Calu3 (cell line): ENCODE measurements at regions of chr11 and their contacts with region 1.

Region 1: GRCh38 chr11:77091146-77091940 is 11.3 kb upstream of the OMP start:
- DNase-seq: peak; percentile 89
- H3K4me3 Mint-ChIP-seq: no peak overlapping the region
- H3K27ac Mint-ChIP-seq: no peak overlapping the region
- H3K4me1 Mint-ChIP-seq: peaks cover 56% of the 10 kb centered on the region
- H3K27me3 Mint-ChIP-seq: no peaks in the 10 kb centered on the region
- CTCF ChIP-seq: peak; percentile 95

Region 2: DNA sequence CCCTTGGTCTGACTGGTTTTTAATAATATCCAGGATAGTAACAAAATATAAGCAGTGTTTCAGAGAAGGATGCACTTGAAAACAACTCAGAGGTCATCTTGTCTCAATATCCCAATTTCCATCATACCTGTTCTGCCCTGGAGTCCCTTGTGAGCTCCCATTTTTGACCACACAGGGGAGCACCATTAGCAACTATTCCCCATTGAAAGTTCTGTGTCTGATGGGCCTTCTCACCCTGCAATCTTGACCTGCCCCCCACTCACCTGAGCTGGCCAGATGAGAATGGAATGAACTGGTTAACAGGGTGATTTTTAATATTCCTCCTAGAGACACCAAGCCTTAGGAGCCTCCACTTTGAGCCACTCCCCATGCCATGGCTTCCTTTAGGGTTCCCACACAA is 28.4 kb before region 1 on chr11:
- CTCF ChIA-PET with region 1: interaction called, 71 read pairs
- intact Hi-C with region 1: loop called (anchors 1 kb)
- DNase-seq: peak; percentile 32
- H3K4me3 Mint-ChIP-seq: no peak overlapping the region
- H3K27ac Mint-ChIP-seq: peak overlapping the region; percentile 36
- H3K4me1 Mint-ChIP-seq: peaks cover 50% of the 10 kb centered on the region
- H3K27me3 Mint-ChIP-seq: no peaks in the 10 kb centered on the region
- CTCF ChIP-seq: no peak

Region 3: DNA sequence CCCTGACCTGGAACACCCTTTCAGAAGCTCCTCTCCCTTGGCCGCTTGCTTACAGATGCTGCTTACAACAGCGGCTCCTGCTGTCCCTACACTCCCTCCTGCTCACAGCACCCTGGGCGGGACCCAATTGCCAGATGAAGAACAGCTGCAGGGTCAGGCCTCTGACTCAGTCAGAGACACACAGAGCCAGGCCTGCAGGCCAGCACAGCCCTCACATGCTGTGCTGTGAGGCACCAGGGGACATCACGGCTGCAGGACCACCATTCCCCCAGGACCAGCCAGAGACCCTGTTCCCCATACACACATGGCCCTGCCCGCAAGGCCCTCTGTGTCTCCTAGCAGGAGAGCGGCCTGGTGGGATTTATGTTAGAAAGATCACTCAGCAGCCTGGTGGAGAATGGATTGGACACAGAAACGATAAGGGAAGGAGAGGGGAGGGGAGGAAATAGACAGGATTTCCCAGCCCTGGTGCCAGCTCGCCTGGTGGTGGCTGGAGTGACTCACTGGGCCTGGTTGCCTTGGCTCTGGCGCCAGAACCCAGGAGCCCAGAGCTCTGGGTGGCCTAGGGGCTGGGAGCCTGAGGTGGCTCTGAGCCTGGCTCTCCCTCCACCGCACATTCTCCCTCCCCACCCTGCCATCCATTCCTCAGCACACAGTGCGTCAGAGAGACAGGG is 17.9 kb before region 1 on chr11:
- CTCF ChIA-PET with region 1: interaction called, 23 read pairs
- intact Hi-C with region 1: loop called (anchors 2 kb)
- DNase-seq: peak; percentile 73
- H3K4me3 Mint-ChIP-seq: peak overlapping the region; percentile 49
- H3K27ac Mint-ChIP-seq: peak overlapping the region; percentile 79
- H3K4me1 Mint-ChIP-seq: peaks cover 63% of the 10 kb centered on the region
- H3K27me3 Mint-ChIP-seq: no peaks in the 10 kb centered on the region
- CTCF ChIP-seq: peak; percentile 13

Region 4: GRCh38 chr11:77107950-77108349 is 16.6 kb after region 1 on chr11:
- CTCF ChIA-PET with region 1: interaction called, 25 read pairs
- intact Hi-C with region 1: no loop called
- DNase-seq: peak; percentile 91
- H3K4me3 Mint-ChIP-seq: peak overlapping the region; percentile 62
- H3K27ac Mint-ChIP-seq: peak overlapping the region; percentile 66
- H3K4me1 Mint-ChIP-seq: peaks cover 33% of the 10 kb centered on the region
- H3K27me3 Mint-ChIP-seq: no peaks in the 10 kb centered on the region
- CTCF ChIP-seq: no peak

Region 5: DNA sequence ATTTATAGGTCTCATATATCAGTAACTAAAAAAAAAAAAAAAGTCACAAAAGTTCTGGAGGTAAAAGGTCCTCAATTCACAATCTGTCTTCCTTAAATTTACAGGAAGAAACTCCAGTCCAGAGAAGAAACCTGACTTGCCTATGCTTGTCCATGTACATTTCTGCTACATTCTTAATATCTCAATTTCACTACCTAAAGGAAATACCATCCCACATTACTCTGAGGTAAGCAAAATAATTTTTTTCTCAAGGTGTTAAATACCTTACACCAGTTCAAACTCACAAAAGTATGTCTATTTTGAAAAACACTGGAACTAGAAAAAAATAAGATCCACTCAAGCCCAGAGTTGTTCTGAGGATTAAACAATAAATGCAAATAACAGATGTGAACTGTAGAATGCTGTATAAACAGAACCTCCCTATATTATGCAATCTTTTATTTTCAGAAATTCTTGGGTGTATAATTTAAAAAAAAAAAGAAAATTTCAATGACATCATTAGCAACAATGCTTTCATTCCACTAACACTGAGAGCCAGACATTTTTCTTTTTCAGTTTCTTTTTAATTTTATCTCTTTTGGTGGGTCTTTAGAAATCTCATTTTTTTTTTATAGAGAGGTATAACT is 260.1 kb after region 1 on chr11:
- CTCF ChIA-PET with region 1: no interaction called
- intact Hi-C with region 1: no loop called
- DNase-seq: no peak
- H3K4me3 Mint-ChIP-seq: no peak overlapping the region
- H3K27ac Mint-ChIP-seq: no peak overlapping the region
- H3K4me1 Mint-ChIP-seq: no peaks in the 10 kb centered on the region
- H3K27me3 Mint-ChIP-seq: no peaks in the 10 kb centered on the region
- CTCF ChIP-seq: no peak